HCT116 (cell line): ENCODE measurements at regions of chr10 and their contacts with region 1.

Region 1: DNA sequence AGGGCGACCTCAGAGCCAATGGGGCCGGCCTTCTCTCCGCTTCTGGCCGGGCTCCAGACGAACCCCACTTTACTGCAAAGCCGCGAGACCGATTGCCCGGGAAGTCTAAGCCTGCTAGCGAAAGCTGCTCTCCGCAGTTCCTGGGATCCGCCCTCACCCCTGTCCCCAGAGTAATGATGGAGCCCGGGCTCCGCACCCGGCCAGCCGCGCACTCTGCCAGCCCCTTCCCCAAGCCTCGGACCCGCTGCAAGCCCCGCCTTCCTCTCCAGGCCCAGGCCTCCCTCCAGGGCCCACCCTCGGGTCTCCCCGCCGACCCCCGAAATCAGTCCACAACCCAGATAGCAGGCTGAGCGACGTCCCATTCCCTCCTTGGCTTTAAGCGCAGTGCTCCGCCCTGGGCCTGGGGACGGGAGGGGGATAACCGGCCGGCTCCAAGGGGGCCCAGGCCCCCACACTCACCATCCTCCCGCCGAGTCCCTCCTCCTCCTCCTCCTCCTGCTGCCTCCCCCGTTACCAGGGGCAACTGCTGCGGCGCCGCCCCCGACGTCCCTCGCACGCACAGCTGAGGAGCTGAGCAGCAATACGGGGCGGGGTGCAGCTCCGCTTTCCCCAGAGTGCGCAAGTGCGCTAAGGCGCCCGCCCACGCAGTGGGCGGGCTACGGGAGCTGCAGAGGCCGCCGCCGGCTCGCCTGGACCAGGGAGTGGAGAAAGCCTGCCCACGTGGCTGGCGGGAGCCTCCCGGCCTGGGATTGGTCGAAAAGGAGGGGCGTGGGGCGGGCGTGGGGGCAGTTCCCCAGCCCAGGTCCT is at the start of gene ARL3:
- DNase-seq: peak; percentile 98
- ATAC-seq: peak; percentile 89
- H3K4me3 ChIP-seq: peak within 1 kb of the TSS; percentile 88 to 95
- H3K27ac ChIP-seq: peak within 1 kb of the TSS; percentile 77
- H3K4me1 ChIP-seq: peaks cover 18 to 29% of the 10 kb centered on the region in 2 experiments
- H3K27me3 ChIP-seq: no peaks in the 10 kb centered on the region
- CTCF ChIP-seq: peak in 2 of 3 experiments; percentile 54 to 60; a peak in 4 of 6 replicates
- POLR2A ChIP-seq: no peak
- RAD21 ChIP-seq: no peak
- total RNA-seq, gene ARL3: 13.3 TPM

Region 2: GRCh38 chr10:102503281-102504220 is 210.5 kb before region 1 on chr10 and contains the start of gene SUFU:
- CTCF ChIA-PET with region 1: no interaction called
- POLR2A ChIA-PET with region 1: no interaction called
- RAD21 ChIA-PET with region 1: no interaction called
- intact Hi-C with region 1: loop called (anchors 2 kb)
- DNase-seq: peak; percentile 100
- ATAC-seq: peak; percentile 72
- H3K4me3 ChIP-seq: peak within 1 kb of the TSS; percentile 83 to 89
- H3K27ac ChIP-seq: peak within 1 kb of the TSS; percentile 59
- H3K4me1 ChIP-seq: peaks cover 13 to 27% of the 10 kb centered on the region in 2 experiments
- H3K27me3 ChIP-seq: no peaks in the 10 kb centered on the region
- CTCF ChIP-seq: peak in 2 of 3 experiments; percentile 94 to 99; a peak in 4 of 6 replicates
- POLR2A ChIP-seq: peak; percentile 53
- RAD21 ChIP-seq: no peak
- total RNA-seq, gene SUFU: 18.8 TPM

Region 3: GRCh38 chr10:102604379-102604960 is 109.5 kb before region 1 on chr10:
- CTCF ChIA-PET with region 1: no interaction called
- POLR2A ChIA-PET with region 1: interaction called, 4 read pairs
- RAD21 ChIA-PET with region 1: no interaction called
- intact Hi-C with region 1: loop called (anchors 5 kb)
- DNase-seq: peak; percentile 86
- ATAC-seq: peak; percentile 79
- H3K4me3 ChIP-seq: peak overlapping the region; percentile 15 to 43
- H3K27ac ChIP-seq: peak overlapping the region; percentile 92
- H3K4me1 ChIP-seq: peaks cover 58 to 76% of the 10 kb centered on the region in 2 experiments
- H3K27me3 ChIP-seq: no peaks in the 10 kb centered on the region
- CTCF ChIP-seq: no peak
- POLR2A ChIP-seq: no peak
- RAD21 ChIP-seq: no peak

Region 4: GRCh38 chr10:102678842-102679289 is 35.2 kb before region 1 on chr10:
- CTCF ChIA-PET with region 1: interaction called, 16 read pairs
- POLR2A ChIA-PET with region 1: interaction called, 5 read pairs
- RAD21 ChIA-PET with region 1: no interaction called
- intact Hi-C with region 1: no loop called
- DNase-seq: no peak
- ATAC-seq: peak; percentile 98
- H3K4me3 ChIP-seq: no peak overlapping the region
- H3K27ac ChIP-seq: no peak overlapping the region
- H3K4me1 ChIP-seq: peaks cover 3 to 10% of the 10 kb centered on the region in 2 experiments; a peak in 3 of 4 replicates
- H3K27me3 ChIP-seq: no peaks in the 10 kb centered on the region
- CTCF ChIP-seq: peak; percentile 62 to 98 (median 95); a peak in 5 of 6 replicates
- POLR2A ChIP-seq: no peak
- RAD21 ChIP-seq: peak; percentile 75